ENCODE measurements at regions of chr4 and their contacts with region 1.

Region 1: GRCh38 chr4:147596981-147597380 is 20.2 kb upstream of the TMEM184C start:
- DNase-seq: peak; percentile 83 to 85
- H3K4me3 ChIP-seq: no peak overlapping the region
- H3K27ac ChIP-seq: peak overlapping the region; percentile 49; the same call in 1 of the 2 replicates
- H3K4me1 ChIP-seq: peaks cover 24% of the 10 kb centered on the region
- H3K27me3 ChIP-seq: no peaks in the 10 kb centered on the region
- CTCF ChIP-seq: no peak

Region 2: GRCh38 chr4:146927695-146928094 is 669.3 kb before region 1 on chr4:
- CTCF ChIA-PET with region 1: no interaction called
- POLR2A ChIA-PET with region 1: no interaction called
- intact Hi-C with region 1: no loop called
- DNase-seq: no peak
- H3K4me3 ChIP-seq: no peak overlapping the region
- H3K27ac ChIP-seq: no peak overlapping the region
- H3K4me1 ChIP-seq: no peaks in the 10 kb centered on the region
- H3K27me3 ChIP-seq: no peaks in the 10 kb centered on the region
- CTCF ChIP-seq: no peak

Region 3: DNA sequence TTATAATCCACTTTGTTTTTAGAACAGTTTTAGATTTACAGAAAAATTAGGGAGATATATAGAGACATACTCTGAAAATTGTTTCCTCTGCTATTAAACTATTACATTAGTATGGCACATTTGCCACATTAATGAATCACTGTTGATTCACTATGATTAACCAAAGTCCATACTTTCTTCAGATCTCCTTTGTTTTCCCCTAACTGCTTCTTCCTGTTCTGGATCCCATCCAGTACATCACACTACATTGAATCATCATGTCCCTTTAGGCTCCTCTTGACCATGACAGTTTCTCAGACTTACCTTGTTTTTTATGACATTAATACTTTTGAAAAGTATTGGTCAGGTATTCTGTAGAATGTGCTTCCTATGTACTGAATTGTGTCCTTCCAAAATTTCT is 225.3 kb before region 1 on chr4:
- CTCF ChIA-PET with region 1: no interaction called
- POLR2A ChIA-PET with region 1: interaction called, 3 read pairs
- intact Hi-C with region 1: loop called (anchors 5 kb)
- DNase-seq: no peak
- H3K4me3 ChIP-seq: no peak overlapping the region
- H3K27ac ChIP-seq: peak overlapping the region; percentile 78
- H3K4me1 ChIP-seq: peaks cover 19% of the 10 kb centered on the region
- H3K27me3 ChIP-seq: no peaks in the 10 kb centered on the region
- CTCF ChIP-seq: no peak

Region 4: GRCh38 chr4:147578051-147578476 is 18.9 kb before region 1 on chr4:
- CTCF ChIA-PET with region 1: no interaction called
- POLR2A ChIA-PET with region 1: interaction called, 10 read pairs
- intact Hi-C with region 1: loop called (anchors 1 kb)
- DNase-seq: peak; percentile 87 to 94
- H3K4me3 ChIP-seq: no peak overlapping the region
- H3K27ac ChIP-seq: peak overlapping the region; percentile 90
- H3K4me1 ChIP-seq: peaks cover 36% of the 10 kb centered on the region
- H3K27me3 ChIP-seq: no peaks in the 10 kb centered on the region
- CTCF ChIP-seq: no peak

Region 5: GRCh38 chr4:147617173-147617840 is 20.3 kb after region 1 on chr4 and contains the start of gene TMEM184C:
- CTCF ChIA-PET with region 1: interaction called, 9 read pairs
- POLR2A ChIA-PET with region 1: interaction called, 20 read pairs
- intact Hi-C with region 1: loop called (anchors 1 kb)
- DNase-seq: peak; percentile 86 to 97
- H3K4me3 ChIP-seq: peak within 1 kb of the TSS; percentile 84
- H3K27ac ChIP-seq: peak within 1 kb of the TSS; percentile 44
- H3K4me1 ChIP-seq: no peaks in the 10 kb centered on the region; the same call in 1 of the 2 replicates
- H3K27me3 ChIP-seq: no peaks in the 10 kb centered on the region
- CTCF ChIP-seq: no peak
- total RNA-seq, gene TMEM184C: 29.1 and 40.4 TPM in 2 replicates